Prostate gland (tissue), 2 donors: ENCODE measurements at regions of chr12 and their contacts with region 1.

Region 1: DNA sequence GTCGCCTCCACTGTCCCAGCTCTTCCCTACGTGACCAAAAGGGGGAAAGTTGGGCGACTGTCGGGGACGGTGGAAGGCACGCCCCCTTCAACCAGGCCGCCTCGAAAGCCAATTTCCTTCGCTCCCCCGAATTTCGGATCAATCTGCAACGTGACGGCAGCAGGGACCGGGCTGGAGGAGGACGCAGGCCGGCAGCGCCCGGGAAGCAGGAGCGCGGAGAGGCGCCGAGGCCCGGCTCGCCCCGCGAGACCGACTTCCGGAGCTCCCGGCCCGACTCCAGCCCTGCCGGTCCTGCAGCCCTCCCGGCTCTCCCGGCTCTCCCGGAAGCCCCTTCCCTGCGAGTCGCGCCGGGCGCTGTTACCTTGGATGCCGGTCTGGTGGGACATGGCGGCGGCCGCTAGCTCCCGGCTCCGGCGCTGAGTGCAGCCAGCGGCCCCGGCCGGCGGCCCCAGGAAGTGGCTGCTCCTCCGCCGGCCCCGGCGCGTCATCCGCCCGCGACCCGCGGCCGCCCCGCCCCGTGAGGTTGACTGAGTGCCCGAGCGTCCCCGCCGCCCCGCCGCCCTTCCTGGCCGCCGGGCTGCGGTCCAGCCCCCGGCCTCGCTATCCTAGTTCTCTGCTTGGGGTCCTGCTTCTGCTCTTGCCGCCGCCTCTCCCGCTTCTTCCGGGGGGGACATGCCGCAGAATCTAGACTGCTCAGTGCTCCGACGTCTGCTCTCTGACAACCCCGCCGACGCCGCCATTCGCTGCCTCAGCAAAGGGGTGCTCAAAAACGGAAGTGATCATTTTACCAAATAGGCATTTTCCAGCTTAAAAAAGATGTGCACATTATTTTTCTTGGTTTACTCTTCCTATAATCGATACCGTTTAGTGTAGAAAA is at the start of gene TWF1:
- DNase-seq: peak; percentile 84
- H3K4me3 ChIP-seq: peak within 1 kb of the TSS; percentile 84 to 88
- H3K27ac ChIP-seq: peak within 1 kb of the TSS; percentile 93 to 96
- H3K4me1 ChIP-seq: no peaks in the 10 kb centered on the region
- H3K27me3 ChIP-seq: no peaks in the 10 kb centered on the region
- CTCF ChIP-seq: peak in 2 of 4 experiments; percentile 13 to 20
- POLR2A ChIP-seq: peak; percentile 50
- total RNA-seq, gene TWF1: 64.5 to 114 TPM

Region 2: GRCh38 chr12:43711348-43711747 is 94.8 kb before region 1 on chr12:
- intact Hi-C with region 1: no loop called
- DNase-seq: no peak
- H3K4me3 ChIP-seq: no peak overlapping the region
- H3K27ac ChIP-seq: no peak overlapping the region
- H3K4me1 ChIP-seq: no peaks in the 10 kb centered on the region
- H3K27me3 ChIP-seq: no peaks in the 10 kb centered on the region
- CTCF ChIP-seq: no peak
- POLR2A ChIP-seq: no peak

Region 3: GRCh38 chr12:43758728-43759563 is 47.2 kb before region 1 on chr12 and contains the starts of genes IRAK4 and PUS7L:
- intact Hi-C with region 1: loop called (anchors 5 kb)
- DNase-seq: peak; percentile 96
- H3K4me3 ChIP-seq: peak within 1 kb of the TSS; percentile 62 to 77
- H3K27ac ChIP-seq: peak within 1 kb of the TSS; percentile 85 to 87
- H3K4me1 ChIP-seq: peaks cover 5% of the 10 kb centered on the region
- H3K27me3 ChIP-seq: no peaks in the 10 kb centered on the region
- CTCF ChIP-seq: peak in 3 of 4 experiments; percentile 39 to 76 (median 53)
- POLR2A ChIP-seq: peak; percentile 65
- total RNA-seq, gene IRAK4: 11.5 to 25.3 TPM
- total RNA-seq, gene PUS7L: 9.7 to 12.7 TPM

Region 4: GRCh38 chr12:43882578-43883178 is 76.6 kb after region 1 on chr12:
- intact Hi-C with region 1: loop called (anchors 5 kb)
- DNase-seq: peak; percentile 26
- H3K4me3 ChIP-seq: no peak overlapping the region
- H3K27ac ChIP-seq: no peak overlapping the region
- H3K4me1 ChIP-seq: peaks cover 8% of the 10 kb centered on the region
- H3K27me3 ChIP-seq: no peaks in the 10 kb centered on the region
- CTCF ChIP-seq: peak; percentile 13 to 86 (median 70)
- POLR2A ChIP-seq: no peak